Gastrocnemius medialis (tissue), 4 donors: ENCODE measurements at regions of chr12 and their contacts with region 1.

Region 1: DNA sequence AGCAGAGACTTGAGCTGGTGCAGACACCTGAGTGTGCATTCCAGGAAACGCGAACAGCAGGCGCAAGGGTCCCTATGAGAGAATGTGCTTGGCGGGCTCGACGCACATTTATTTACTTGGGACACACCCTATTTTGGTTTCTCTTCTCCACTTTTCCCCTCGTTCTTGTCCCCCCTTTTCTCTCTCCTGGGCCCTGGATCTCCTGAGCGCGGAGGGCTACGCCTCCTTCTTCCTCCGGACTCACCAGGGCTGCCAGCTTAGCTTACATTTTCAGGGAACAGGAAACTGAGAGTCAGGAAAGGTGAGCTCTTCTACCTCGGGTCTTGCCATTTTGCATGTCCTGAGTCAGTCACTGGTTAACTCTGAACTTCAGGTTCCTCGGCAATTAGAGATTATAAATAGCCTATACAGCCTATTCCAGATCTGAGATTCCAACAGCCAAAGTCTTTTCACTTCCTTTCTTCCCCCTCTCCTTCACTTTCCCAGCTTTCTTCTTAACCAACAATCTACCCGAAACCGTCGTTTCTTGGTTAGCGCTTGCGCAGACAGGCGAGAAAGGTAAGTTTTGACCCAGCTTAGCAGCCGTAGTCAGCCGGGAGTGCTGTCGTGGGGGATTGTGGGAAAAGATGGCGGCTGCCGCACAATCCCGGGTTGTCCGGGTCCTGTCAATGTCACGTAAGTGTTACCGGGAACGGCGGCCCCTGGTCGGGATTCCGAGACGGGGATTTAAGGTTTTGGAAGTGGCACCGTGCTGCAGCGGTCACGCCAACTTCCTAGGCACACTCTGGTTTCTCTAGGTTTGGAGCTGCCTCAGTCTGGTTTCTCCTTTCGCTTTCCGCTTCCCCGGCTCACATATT is at the starts of genes AKAP3 and NDUFA9:
- DNase-seq: peak; percentile 72 to 78
- ATAC-seq: peak; percentile 97
- H3K4me3 ChIP-seq: peak within 1 kb of the TSS; percentile 72 to 90 (median 80)
- H3K27ac ChIP-seq: peak within 1 kb of the TSS; percentile 79 to 92 (median 89)
- H3K4me1 ChIP-seq: peaks cover 44 to 45% of the 10 kb centered on the region in 2 donors
- H3K27me3 ChIP-seq: no peaks in the 10 kb centered on the region
- CTCF ChIP-seq: no peak
- POLR2A ChIP-seq: peak; percentile 34 to 47
- total RNA-seq, gene AKAP3: 0.27 to 1.7 (median 0.71) TPM
- total RNA-seq, gene NDUFA9: 57.9 to 113 (median 69.5) TPM

Region 2: GRCh38 chr12:3964439-3964838 is 684.3 kb before region 1 on chr12:
- in situ Hi-C with region 1: no loop called
- intact Hi-C with region 1: no loop called
- DNase-seq: no peak
- ATAC-seq: no peak
- H3K4me3 ChIP-seq: no peak overlapping the region
- H3K27ac ChIP-seq: no peak overlapping the region
- H3K4me1 ChIP-seq: no peaks in the 10 kb centered on the region
- H3K27me3 ChIP-seq: no peaks in the 10 kb centered on the region
- CTCF ChIP-seq: peak in 1 of 5 experiments; percentile 19
- POLR2A ChIP-seq: no peak

Region 3: DNA sequence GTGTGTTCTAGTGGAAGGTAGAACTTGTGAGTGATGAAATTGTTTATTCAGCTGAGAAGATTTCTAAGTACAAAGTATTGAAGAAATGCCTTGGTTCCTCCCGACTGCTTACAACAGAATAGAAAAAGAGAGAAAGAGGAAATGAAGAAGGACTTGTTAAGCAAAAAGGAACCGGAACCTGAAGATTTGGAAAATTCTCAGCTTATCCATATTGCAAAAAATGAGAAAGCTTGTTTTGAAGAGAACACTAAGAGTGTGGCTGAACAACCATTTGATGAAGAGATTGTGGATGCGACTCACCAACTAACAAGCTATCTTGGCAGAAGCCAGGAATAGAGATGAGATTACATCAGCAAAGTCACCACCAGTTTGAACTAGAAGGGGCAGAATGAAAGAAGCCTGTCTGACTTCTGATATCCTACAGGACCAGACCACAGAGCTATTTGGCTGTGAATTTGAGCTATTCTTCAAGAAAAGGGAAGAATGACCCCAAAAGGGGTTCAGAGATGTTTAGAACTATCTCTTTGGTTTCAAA is 15.3 kb after region 1 on chr12:
- in situ Hi-C with region 1: no loop called
- intact Hi-C with region 1: no loop called
- DNase-seq: no peak
- ATAC-seq: no peak
- H3K4me3 ChIP-seq: no peak overlapping the region
- H3K27ac ChIP-seq: no peak overlapping the region
- H3K4me1 ChIP-seq: no peaks in the 10 kb centered on the region
- H3K27me3 ChIP-seq: no peaks in the 10 kb centered on the region
- CTCF ChIP-seq: no peak
- POLR2A ChIP-seq: no peak

Region 4: DNA sequence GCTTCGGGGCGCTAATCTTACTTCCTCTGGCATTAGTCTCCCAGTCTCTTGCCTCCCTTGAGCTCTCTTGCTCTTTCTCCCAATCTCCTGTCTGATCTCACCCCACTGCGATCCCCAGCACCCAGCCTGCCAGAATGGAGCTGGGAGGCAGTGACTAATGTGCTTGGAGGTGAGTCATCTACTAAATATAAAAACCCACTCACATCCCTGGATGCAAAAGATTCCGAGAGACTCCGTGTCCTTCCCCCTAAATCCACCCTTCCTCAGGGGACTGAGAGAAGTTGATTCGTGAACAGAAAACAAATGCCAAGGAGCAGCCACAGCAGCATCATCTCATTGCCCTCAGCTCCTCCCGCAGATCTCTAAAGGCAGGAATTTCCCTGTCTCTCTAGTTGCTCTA is 349.2 kb after region 1 on chr12:
- in situ Hi-C with region 1: no loop called
- intact Hi-C with region 1: loop called (anchors 5 kb)
- DNase-seq: peak; percentile 56 to 79
- ATAC-seq: peak; percentile 97 to 98
- H3K4me3 ChIP-seq: no peak overlapping the region
- H3K27ac ChIP-seq: peak overlapping the region; percentile 56 to 72 (median 66)
- H3K4me1 ChIP-seq: peaks cover 11 to 13% of the 10 kb centered on the region in 2 donors
- H3K27me3 ChIP-seq: peaks cover 0 to 3% (median 0%) of the 10 kb centered on the region in 3 donors
- CTCF ChIP-seq: no peak
- POLR2A ChIP-seq: no peak